ENCODE measurements at regions of chr7 and their contacts with region 1.

Region 1: DNA sequence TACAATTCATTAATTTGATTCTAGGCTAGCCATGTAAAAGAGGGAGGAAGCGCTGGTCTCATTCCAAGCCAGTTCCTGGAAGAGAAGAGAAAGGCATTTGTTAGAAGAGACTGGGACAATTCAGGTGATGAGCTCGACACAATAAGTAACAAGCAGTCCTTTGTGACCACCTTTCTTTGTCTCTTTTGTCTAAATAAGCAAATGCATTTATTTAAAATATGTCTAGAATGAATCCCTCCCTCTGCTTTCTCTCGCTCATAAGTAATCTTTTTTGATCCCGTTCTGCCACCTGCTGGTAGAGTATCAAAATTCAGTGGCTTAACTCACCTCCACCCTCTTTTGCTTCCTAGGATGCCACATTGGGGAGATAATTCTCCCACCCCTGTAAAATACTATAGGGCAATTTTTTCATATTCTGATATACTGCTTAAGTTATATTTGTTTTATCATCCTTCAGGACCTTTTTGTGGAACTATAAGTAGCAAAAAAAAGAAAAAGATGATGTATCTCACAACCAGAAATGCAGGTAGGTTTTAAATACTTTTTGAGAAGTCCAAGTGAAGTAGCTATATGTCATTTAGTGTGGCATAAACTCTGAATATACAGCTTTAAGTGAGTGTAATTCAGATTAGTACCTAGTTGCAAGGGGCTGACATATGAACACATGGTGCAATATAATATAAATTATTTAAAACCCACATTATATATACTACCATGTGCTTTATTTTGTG is 91.5 kb downstream of the GSDME start:
- DNase-seq: peak in 3 of 6 donors; percentile 15 to 38 (median 20)
- ATAC-seq: peak; percentile 71 to 83 (median 80)
- H3K4me3 ChIP-seq: no peak overlapping the region
- H3K27ac ChIP-seq: no peak overlapping the region
- H3K4me1 ChIP-seq: peaks cover 0 to 4% (median 0%) of the 10 kb centered on the region in 3 donors
- H3K27me3 ChIP-seq: no peaks in the 10 kb centered on the region
- CTCF ChIP-seq: peak; percentile 34 to 61 (median 51)

Region 2: GRCh38 chr7:24401628-24402593 is 263.8 kb before region 1 on chr7:
- intact Hi-C with region 1: loop called in 1 of 3 experiments (anchors 10 kb)
- DNase-seq: no peak
- ATAC-seq: peak; percentile 55 to 91 (median 84)
- H3K4me3 ChIP-seq: no peak overlapping the region
- H3K27ac ChIP-seq: no peak overlapping the region
- H3K4me1 ChIP-seq: no peaks in the 10 kb centered on the region
- H3K27me3 ChIP-seq: no peaks in the 10 kb centered on the region
- CTCF ChIP-seq: peak in 2 of 4 donors; percentile 29 to 36

Measured in pancreas (tissue), 10 donors.